Posterior cingulate gyrus (tissue), 11 donors: ENCODE measurements at regions of chr11 and their contacts with region 1.

Region 1: DNA sequence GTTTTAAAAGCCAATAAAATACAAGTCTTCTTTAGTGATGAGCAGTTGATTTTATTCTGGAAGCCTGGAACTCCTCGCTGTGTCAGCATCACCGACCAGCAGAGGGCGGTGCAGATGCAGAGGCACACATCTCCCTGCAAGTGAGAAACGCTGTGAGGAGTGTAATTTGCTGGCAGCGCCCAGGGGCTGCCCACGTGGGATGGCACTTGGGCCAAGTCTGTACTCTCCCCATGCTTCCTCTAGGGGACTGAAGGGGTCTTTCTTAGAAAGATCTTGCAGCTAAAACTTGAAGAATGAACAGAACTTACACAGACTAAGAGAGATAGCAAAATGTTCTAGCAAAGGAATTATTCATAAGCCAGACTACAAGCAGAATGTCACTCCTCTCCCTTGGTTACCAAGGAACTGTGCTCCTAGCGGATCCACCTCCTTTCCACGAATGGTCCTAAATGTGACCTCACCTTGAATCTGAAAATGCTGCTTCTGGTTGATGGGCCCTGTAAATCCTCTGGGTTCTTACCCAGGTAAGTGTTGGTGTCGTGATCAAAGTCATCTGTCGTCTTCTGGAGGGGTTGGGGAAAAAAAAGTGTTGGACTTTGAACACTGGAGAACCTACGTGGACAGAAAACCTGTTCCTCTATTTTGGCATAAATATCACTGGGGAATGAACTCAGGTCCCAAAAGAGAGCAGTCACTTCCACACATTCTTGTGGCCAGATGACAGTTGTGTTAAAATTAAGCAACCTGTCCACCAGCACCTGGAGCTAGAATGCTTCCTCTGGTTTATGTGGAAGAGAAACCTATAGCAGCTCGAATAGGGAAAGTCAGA is 31.8 kb downstream of the CNTF start:
- DNase-seq: peak; percentile 59 to 96 (median 80)

Region 2: DNA sequence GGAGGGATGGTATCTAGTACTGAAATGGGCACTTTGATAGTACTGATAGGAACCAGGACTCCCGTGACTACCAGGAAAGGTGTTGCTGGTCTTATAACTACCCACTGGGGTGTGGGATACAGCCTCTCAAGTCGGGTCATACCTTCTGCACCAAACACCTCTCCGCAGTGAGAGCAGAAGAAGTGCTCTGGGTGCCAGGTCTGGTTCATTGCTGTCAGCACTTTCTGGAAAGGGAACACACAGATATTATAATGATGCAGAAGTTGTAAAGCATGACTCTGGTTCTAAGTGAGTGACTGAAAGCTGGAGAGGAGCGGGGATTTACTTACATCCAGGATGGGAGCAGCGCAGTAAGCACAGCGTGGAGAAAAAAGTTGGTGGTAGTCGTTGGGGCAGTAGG is 104.6 kb before region 1 on chr11:
- intact Hi-C with region 1: no loop called
- DNase-seq: no peak

Region 3: DNA sequence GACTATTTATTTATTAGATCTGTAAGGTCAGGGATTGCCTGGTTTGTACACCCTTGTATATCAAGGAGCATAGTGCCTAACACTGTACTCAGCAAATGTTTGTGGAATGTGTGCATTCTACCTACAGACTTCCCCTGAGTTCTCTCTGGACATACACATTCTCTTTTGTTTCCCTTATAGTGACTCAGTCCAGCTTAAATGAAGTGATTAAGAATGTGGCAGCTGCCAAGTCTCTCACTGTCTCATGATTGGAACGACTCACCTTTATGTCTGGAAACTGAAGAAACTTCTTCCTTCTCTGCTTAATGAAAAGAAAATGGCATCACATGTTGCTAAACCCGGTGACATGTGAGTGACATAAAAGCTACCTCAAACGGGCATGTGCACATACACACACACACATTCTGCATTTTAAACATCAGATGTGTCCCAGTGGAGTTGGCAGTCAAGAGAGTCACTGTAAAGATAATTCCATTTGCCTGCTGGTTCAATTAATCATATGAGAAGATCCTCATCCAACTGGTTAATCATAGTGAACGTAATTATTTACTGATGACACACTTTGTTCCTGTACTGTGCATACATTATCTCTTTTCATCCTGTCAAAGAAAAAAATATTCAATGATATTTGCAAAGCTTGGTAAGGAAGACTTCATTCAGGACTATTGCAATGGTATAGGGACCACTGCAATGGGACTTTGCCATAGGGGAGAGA is 34.7 kb after region 1 on chr11:
- intact Hi-C with region 1: no loop called
- DNase-seq: no peak

Region 4: DNA sequence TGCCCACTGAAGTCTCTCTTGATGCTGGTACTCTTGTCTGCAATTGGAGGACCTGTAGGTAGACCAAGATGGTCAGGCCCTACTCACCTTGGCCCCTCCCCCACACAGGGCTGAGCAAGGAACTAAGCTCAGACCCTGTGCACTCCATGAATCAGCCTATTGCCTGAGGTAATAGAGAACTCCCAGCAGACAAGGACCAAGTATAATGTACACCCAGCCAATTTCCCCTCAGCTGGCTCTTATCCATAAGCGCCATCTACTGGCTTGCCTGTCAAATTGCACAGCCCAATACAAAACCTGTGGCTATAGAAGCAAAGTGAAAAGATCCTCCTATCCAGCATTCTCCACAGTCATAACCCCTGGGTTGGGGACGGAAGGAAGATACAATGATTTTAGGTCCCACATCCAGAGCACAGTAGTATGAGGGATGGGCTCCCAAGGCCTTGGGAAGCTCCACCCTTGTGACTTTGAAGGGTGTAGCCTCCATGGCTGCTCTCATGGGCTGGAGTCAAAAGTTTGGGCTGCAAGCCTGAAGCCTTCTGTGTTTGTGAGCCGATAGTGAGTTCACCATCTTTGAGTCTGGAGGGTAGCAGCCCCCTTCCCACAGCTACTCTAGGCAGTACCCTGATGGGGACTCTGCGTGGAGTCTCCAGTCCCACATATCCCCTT is 134.2 kb after region 1 on chr11:
- intact Hi-C with region 1: loop called (anchors 5 kb)
- DNase-seq: peak in 7 of 10 donors; percentile 13 to 83 (median 30)